Naive thymus-derived CD4-positive, alpha-beta T cell (primary cell): ENCODE measurements at regions of chr19 and their contacts with region 1.

Region 1: DNA sequence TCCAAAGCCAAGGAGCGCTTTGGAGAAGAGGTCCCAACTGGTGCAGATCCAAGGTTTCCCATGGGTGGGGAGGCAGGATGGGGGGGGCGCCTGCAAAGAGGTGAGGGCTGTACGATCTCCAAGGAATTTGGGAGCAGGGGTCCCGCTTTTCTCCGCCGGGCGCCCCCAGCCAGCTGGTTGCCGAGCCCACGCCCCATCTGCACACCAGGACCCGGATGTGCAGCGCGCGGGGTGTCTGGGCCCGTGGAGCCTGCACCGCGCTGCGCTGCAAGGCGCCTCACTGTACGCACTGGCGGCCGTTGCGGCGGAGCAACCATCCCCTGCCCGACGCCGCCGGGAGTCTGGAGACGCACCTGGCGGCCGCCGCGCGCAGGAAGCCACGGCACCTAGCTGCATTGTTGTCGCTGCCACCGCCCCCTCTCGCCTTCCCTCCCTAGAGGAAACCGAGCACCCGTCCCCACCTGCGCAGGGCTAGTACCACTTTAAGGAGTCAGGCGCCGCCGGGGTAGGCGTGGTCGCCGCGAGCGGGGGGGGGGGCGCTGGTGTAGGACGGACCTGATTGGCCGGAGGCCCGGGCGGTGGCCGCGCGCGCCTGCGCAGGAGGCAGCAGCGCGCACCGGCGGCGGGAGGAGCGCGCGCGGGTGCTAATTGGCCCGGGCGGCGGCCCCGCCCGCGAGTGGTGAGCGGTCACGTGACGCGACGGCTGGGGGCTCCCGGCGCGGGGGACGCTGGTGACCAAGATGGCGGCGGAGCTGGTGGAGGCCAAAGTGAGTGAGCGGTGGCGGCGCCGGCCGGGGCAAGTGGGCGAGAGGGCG is at the start of gene PIAS4:
- DNase-seq: peak; percentile 93 to 97 (median 96)
- ATAC-seq: peak; percentile 95
- H3K4me3 ChIP-seq: peak within 1 kb of the TSS; percentile 76
- H3K4me3 Mint-ChIP-seq: peak within 1 kb of the TSS; percentile 82 to 93 (median 88)
- H3K27ac ChIP-seq: peak within 1 kb of the TSS; percentile 75
- H3K27ac Mint-ChIP-seq: peak within 1 kb of the TSS; percentile 31 to 93 (median 85)
- H3K4me1 ChIP-seq: peaks cover 26 to 27% of the 10 kb centered on the region in 2 donors
- H3K4me1 Mint-ChIP-seq: peaks cover 13 to 33% (median 23%) of the 10 kb centered on the region in 7 donors
- H3K27me3 ChIP-seq: no peaks in the 10 kb centered on the region
- H3K27me3 Mint-ChIP-seq: no peaks in the 10 kb centered on the region
- total RNA-seq, gene PIAS4: 23.9 to 40.6 (median 28.8) TPM

Region 2: DNA sequence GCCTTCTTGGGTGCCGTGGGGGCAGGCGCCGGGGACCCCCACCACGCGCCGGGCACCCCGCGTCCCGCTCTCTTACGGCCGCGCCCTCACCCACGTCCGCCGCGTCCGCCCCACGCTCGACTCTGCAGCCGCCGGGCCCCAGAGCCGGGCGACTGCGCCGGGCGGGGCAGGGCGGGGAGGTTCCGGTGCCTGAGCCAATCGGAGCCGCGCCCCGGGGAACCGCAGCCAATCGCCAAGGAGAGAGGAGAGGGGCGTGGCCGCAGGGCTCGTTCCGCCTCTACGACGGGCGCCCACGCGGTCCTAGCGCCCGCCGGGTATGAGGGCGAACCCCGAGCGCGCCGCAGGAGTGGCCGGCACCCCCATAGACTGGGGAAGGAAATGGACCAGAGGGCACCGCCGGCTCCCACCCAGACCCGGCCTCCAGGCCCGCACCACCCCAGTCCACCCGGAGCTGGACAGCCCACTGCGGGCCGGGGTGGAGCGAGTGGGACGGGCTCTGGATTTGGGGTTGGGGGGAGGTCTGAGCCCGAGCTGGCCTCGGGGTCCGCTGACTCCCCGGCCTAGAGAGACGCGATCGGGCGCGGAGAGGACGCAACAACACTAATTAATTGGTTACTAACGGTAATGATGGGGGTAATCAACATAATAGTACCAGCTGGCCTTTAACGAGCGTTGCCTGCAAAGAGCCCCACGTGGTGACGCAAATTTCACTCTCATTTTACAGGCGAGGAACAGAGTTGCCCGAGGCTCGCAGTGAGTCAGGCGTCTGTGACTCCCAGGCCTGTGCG is 449.6 kb before region 1 on chr19 and contains the start of gene MFSD12:
- CTCF ChIA-PET with region 1: no interaction called
- POLR2A ChIA-PET with region 1: interaction called, 3 read pairs
- intact Hi-C with region 1: loop called in 1 of 2 experiments (anchors 10 kb)
- DNase-seq: peak; percentile 88 to 98 (median 93)
- ATAC-seq: peak; percentile 94
- H3K4me3 ChIP-seq: peak within 1 kb of the TSS; percentile 90
- H3K4me3 Mint-ChIP-seq: peak within 1 kb of the TSS; percentile 92 to 100 (median 96)
- H3K27ac ChIP-seq: peak within 1 kb of the TSS; percentile 83
- H3K27ac Mint-ChIP-seq: peak within 1 kb of the TSS; percentile 92 to 97 (median 95)
- H3K4me1 ChIP-seq: peaks cover 25 to 30% of the 10 kb centered on the region in 2 donors
- H3K4me1 Mint-ChIP-seq: peaks cover 18 to 40% (median 38%) of the 10 kb centered on the region in 7 donors
- H3K27me3 ChIP-seq: no peaks in the 10 kb centered on the region
- H3K27me3 Mint-ChIP-seq: no peaks in the 10 kb centered on the region
- total RNA-seq, gene MFSD12: 95.2 to 153 (median 101) TPM

Region 3: GRCh38 chr19:3893509-3894179 is 113.6 kb before region 1 on chr19:
- CTCF ChIA-PET with region 1: no interaction called
- POLR2A ChIA-PET with region 1: no interaction called
- intact Hi-C with region 1: no loop called
- DNase-seq: no peak
- ATAC-seq: no peak
- H3K4me3 ChIP-seq: no peak overlapping the region
- H3K4me3 Mint-ChIP-seq: no peak overlapping the region
- H3K27ac ChIP-seq: no peak overlapping the region
- H3K27ac Mint-ChIP-seq: no peak overlapping the region
- H3K4me1 ChIP-seq: no peaks in the 10 kb centered on the region
- H3K4me1 Mint-ChIP-seq: peaks cover 0 to 5% (median 4%) of the 10 kb centered on the region in 7 donors
- H3K27me3 ChIP-seq: no peaks in the 10 kb centered on the region
- H3K27me3 Mint-ChIP-seq: peaks cover 0 to 3% (median 0%) of the 10 kb centered on the region in 5 donors

Region 4: DNA sequence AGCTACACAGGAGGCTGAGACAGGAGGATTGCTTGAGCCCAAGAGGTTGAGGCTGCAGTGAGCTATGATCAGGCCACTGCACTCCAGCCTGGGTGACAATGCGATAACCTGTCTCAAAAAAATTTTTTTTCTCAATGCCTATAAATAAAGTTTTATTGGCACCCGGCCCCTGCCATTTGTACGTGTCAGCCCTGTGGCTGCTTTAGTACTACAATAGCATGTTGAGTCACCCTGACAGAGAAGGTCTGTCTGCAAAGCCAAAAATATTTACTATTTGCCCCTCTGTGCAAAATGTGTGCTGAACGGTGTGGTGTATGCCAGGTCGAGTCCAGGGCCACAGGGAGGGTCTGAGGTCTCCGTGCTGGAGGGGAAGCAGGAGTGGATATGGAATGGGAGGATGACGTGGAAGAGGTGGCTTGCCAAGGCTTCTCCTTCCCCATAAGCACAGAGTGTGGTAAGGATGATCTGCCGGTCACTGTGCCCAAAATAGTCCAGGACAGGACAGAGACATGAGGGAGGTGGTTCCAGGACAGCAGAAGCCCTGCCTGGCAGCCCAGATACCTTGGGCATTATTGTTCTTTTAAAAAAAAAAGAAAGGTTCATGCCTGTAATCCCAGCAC is 64.3 kb before region 1 on chr19:
- CTCF ChIA-PET with region 1: no interaction called
- POLR2A ChIA-PET with region 1: no interaction called
- intact Hi-C with region 1: no loop called
- DNase-seq: no peak
- ATAC-seq: no peak
- H3K4me3 ChIP-seq: no peak overlapping the region
- H3K4me3 Mint-ChIP-seq: no peak overlapping the region
- H3K27ac ChIP-seq: no peak overlapping the region
- H3K27ac Mint-ChIP-seq: no peak overlapping the region
- H3K4me1 ChIP-seq: no peaks in the 10 kb centered on the region
- H3K4me1 Mint-ChIP-seq: peaks cover 0 to 5% (median 0%) of the 10 kb centered on the region in 7 donors
- H3K27me3 ChIP-seq: no peaks in the 10 kb centered on the region
- H3K27me3 Mint-ChIP-seq: no peaks in the 10 kb centered on the region

Region 5: GRCh38 chr19:3958808-3959707 is 48.2 kb before region 1 on chr19:
- CTCF ChIA-PET with region 1: no interaction called
- POLR2A ChIA-PET with region 1: no interaction called
- intact Hi-C with region 1: no loop called
- DNase-seq: no peak
- ATAC-seq: no peak
- H3K4me3 ChIP-seq: no peak overlapping the region
- H3K4me3 Mint-ChIP-seq: no peak overlapping the region
- H3K27ac ChIP-seq: no peak overlapping the region
- H3K27ac Mint-ChIP-seq: no peak overlapping the region
- H3K4me1 ChIP-seq: no peaks in the 10 kb centered on the region
- H3K4me1 Mint-ChIP-seq: no peaks in the 10 kb centered on the region
- H3K27me3 ChIP-seq: no peaks in the 10 kb centered on the region
- H3K27me3 Mint-ChIP-seq: no peaks in the 10 kb centered on the region

Region 6: DNA sequence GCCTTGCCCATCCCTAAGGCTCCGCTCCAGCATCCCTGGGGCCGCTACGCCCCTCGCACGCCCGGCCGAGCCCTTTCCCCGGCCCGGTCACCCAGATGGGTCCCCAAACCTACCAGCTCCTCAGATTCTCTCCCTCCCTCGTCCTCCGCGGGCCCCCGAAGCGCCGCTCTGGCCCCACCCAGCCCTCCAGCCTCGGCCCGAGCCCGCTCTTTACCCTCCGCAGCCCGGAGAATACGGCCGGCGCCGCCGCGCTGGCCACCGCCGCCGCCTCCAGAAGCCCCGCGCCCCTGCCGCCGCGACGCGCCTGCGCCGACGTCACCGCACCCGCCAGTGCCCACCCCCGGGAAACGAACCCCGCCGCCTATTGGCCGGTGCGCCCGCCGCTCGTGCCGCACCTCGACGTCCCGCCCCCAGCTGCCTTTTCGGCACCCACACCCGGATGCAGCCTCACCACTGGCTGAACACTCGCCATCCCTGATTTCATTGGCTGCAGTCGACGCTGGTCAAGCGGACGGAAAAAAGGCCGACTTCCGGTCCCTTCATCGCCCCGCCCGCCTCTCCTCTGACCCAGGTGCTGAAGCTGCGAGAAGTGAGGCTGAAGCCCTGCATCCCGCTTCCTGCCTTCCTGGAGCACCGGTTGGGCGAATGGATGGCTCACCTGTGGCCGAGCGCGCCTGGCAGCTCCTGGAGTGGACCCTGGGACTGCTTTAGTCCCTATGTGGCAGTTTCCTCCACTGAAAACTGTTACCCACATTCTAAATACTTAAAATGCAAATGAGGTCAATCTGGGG is 36.2 kb before region 1 on chr19 and contains the start of gene DAPK3:
- CTCF ChIA-PET with region 1: no interaction called
- POLR2A ChIA-PET with region 1: no interaction called
- intact Hi-C with region 1: loop called (anchors 1 kb)
- DNase-seq: peak; percentile 75 to 97 (median 86)
- ATAC-seq: peak; percentile 97
- H3K4me3 ChIP-seq: peak within 1 kb of the TSS; percentile 90
- H3K4me3 Mint-ChIP-seq: peak within 1 kb of the TSS; percentile 64 to 98 (median 90)
- H3K27ac ChIP-seq: peak within 1 kb of the TSS; percentile 90
- H3K27ac Mint-ChIP-seq: peak within 1 kb of the TSS; percentile 44 to 89 (median 83)
- H3K4me1 ChIP-seq: peaks cover 13 to 16% of the 10 kb centered on the region in 2 donors
- H3K4me1 Mint-ChIP-seq: peaks cover 13 to 34% (median 29%) of the 10 kb centered on the region in 7 donors
- H3K27me3 ChIP-seq: no peaks in the 10 kb centered on the region
- H3K27me3 Mint-ChIP-seq: no peaks in the 10 kb centered on the region
- total RNA-seq, gene DAPK3: 24.7 to 40.3 (median 33.9) TPM

Region 7: DNA sequence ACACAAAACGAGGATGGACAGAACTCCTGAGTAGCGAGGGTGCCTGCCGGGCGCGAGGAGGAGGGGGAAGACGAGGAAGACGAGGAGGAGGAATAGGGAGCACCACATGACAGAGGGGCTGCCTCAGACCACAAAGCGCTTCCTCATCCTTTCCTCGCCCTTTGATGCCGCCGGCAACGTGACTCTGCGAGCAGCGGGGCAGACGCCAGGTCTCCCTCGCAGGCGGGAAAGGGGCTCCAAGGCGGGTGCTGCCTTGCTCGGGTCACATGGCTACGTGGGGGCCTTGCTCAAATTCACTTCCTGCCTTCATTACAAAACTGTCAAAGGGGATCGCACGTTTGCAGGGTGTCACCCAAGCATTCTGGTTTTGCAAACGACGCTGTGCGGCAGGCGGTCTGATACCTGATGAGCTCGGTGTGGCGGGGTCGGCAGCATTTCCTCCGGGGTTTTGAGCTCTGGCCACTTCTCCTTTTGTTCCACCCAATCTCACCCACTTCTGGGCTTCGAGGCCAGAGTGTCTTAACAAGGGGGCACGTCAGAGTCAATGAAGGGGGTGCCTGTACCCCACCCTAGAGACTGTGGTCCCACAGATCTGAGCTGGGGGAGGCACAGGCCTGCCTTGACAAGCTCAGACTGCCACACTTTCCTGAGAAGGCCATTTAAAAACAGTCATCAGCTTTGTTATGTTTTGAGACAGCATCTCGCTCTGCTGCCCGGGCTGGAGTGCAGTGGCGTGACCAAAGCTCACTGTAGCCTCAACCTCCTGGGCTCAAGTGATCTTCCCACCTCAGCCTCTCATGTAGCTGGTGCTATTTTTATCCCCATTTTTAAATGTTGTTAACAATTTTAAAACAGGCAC is 101.8 kb after region 1 on chr19:
- CTCF ChIA-PET with region 1: no interaction called
- POLR2A ChIA-PET with region 1: interaction called, 4 read pairs
- intact Hi-C with region 1: loop called in 1 of 2 experiments (anchors 2 kb)
- DNase-seq: peak; percentile 35 to 83 (median 79)
- ATAC-seq: peak; percentile 67
- H3K4me3 ChIP-seq: peak overlapping the region; percentile 11
- H3K4me3 Mint-ChIP-seq: peak overlapping the region; percentile 54 to 80 (median 74)
- H3K27ac ChIP-seq: peak overlapping the region; percentile 72
- H3K27ac Mint-ChIP-seq: peak overlapping the region; percentile 86 to 97 (median 94)
- H3K4me1 ChIP-seq: peaks cover 44 to 53% of the 10 kb centered on the region in 2 donors
- H3K4me1 Mint-ChIP-seq: peaks cover 34 to 85% (median 55%) of the 10 kb centered on the region in 7 donors
- H3K27me3 ChIP-seq: no peaks in the 10 kb centered on the region
- H3K27me3 Mint-ChIP-seq: no peaks in the 10 kb centered on the region

Region 8: GRCh38 chr19:4123615-4124568 is 116.7 kb after region 1 on chr19 and contains the start of gene MAP2K2:
- CTCF ChIA-PET with region 1: no interaction called
- POLR2A ChIA-PET with region 1: no interaction called
- intact Hi-C with region 1: loop called (anchors 1 to 5 kb)
- DNase-seq: peak; percentile 91 to 99 (median 96)
- ATAC-seq: peak; percentile 96
- H3K4me3 ChIP-seq: peak within 1 kb of the TSS; percentile 77
- H3K4me3 Mint-ChIP-seq: peak within 1 kb of the TSS; percentile 89 to 100 (median 94)
- H3K27ac ChIP-seq: peak within 1 kb of the TSS; percentile 80
- H3K27ac Mint-ChIP-seq: peak within 1 kb of the TSS; percentile 89 to 97 (median 93)
- H3K4me1 ChIP-seq: peaks cover 10 to 11% of the 10 kb centered on the region in 2 donors
- H3K4me1 Mint-ChIP-seq: peaks cover 17 to 31% (median 25%) of the 10 kb centered on the region in 7 donors
- H3K27me3 ChIP-seq: no peaks in the 10 kb centered on the region
- H3K27me3 Mint-ChIP-seq: no peaks in the 10 kb centered on the region
- total RNA-seq, gene MAP2K2: 87.4 to 162 (median 123) TPM

Region 9: DNA sequence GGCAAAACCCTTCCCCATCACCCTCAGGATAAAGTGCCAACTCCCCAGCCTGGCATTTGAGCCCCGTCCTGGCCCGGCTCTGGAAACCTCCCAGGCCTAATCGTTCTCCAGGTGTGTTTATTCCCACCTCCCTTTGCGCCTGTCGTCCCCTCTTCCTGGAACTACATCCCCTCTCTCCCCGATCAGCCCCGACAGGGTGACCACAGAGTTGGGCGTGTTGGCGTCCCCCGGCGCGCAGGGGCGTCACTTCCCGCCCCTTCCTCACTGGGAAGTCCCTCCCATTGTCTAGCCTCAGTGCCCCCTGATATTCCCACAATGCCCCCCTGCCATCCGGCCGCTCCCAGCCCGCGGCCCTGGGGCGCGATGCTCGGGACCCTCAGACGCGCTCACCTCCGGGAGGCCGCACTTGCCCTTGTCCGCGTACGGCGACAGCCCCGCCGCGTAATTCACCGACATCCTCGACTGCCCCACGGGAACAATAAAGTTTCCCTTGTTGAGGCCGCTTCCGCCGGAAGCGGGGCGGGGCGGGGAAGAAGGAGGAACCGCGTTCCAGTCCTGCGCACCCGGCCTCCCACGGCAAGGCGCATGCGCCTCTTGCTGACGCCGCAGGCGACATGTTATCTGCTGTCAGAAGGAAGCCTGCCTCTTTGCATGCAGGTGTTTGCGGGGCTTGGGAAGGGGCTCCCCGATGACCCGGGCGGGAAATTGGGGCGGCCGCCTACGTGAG is 175.0 kb after region 1 on chr19 and contains the starts of genes ANKRD24 and SIRT6:
- CTCF ChIA-PET with region 1: no interaction called
- POLR2A ChIA-PET with region 1: no interaction called
- intact Hi-C with region 1: loop called (anchors 1 to 5 kb)
- DNase-seq: peak; percentile 91 to 97 (median 96)
- ATAC-seq: peak; percentile 90
- H3K4me3 ChIP-seq: peak within 1 kb of the TSS; percentile 90
- H3K4me3 Mint-ChIP-seq: peak within 1 kb of the TSS; percentile 92 to 99 (median 96)
- H3K27ac ChIP-seq: peak within 1 kb of the TSS; percentile 86
- H3K27ac Mint-ChIP-seq: peak within 1 kb of the TSS; percentile 92 to 98 (median 95)
- H3K4me1 ChIP-seq: peaks cover 14 to 15% of the 10 kb centered on the region in 2 donors
- H3K4me1 Mint-ChIP-seq: peaks cover 25 to 44% (median 39%) of the 10 kb centered on the region in 7 donors
- H3K27me3 ChIP-seq: no peaks in the 10 kb centered on the region
- H3K27me3 Mint-ChIP-seq: peaks cover 0 to 2% (median 0%) of the 10 kb centered on the region in 5 donors
- total RNA-seq, gene ANKRD24: 0.75 to 2.8 (median 2.4) TPM
- total RNA-seq, gene SIRT6: 20.0 to 41.2 (median 26.0) TPM

Region 10: GRCh38 chr19:4246767-4247593 is 239.8 kb after region 1 on chr19 and contains the start of gene YJU2:
- CTCF ChIA-PET with region 1: no interaction called
- POLR2A ChIA-PET with region 1: no interaction called
- intact Hi-C with region 1: loop called (anchors 1 kb)
- DNase-seq: peak; percentile 92 to 100 (median 99)
- ATAC-seq: peak; percentile 96
- H3K4me3 ChIP-seq: peak within 1 kb of the TSS; percentile 100
- H3K4me3 Mint-ChIP-seq: peak within 1 kb of the TSS; percentile 85 to 98 (median 96)
- H3K27ac ChIP-seq: peak within 1 kb of the TSS; percentile 99
- H3K27ac Mint-ChIP-seq: peak within 1 kb of the TSS; percentile 97 to 100 (median 99)
- H3K4me1 ChIP-seq: peaks cover 12 to 13% of the 10 kb centered on the region in 2 donors
- H3K4me1 Mint-ChIP-seq: peaks cover 10 to 33% (median 24%) of the 10 kb centered on the region in 7 donors
- H3K27me3 ChIP-seq: no peaks in the 10 kb centered on the region
- H3K27me3 Mint-ChIP-seq: peaks cover 0 to 2% (median 0%) of the 10 kb centered on the region in 5 donors
- total RNA-seq, gene YJU2: 28.5 to 42.1 (median 31.9) TPM